H1 (cell line): ENCODE measurements at regions of chr2 and their contacts with region 1.

Region 1: DNA sequence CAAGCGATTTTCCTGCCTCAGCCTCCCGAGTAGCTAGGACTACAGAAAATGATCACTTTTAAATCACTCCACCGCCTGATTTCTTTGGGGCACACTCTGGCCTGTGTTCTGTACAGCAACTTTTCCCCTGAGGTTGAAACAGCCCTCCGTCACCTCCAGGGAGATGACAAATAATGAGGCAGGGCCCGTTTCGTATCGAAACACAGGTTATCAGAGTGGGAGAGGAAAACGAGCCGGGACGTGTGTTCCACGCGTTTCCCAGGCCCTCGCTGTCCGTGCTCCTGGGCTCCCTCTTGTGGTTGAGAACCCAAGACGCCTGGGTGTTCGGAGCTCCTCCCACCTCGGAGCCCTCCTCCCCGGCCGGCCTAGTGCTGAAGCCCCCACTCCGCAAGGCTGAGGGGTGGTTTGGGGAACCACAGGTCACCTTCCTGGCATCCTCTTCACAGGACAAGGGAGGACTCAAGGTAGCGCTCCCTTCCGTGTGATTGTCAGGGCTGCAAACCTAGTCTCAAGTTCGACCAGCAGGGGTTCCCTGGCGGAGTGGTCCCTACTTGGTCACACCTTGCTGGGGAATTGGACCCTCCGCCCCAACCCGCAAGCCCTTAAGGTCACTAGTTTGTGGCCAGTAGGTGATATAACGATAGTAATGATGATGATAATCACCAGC is 12.8 kb downstream of the ATP6V1B1 start:
- DNase-seq: peak in 1 of 2 experiments; percentile 92
- H3K4me3 ChIP-seq: peak overlapping the region in 3 of 4 experiments; percentile 25 to 46 (median 38); a peak in 5 of 8 replicates
- H3K27ac ChIP-seq: no peak overlapping the region
- H3K4me1 ChIP-seq: peaks cover 1 to 6% (median 3%) of the 10 kb centered on the region in 4 experiments
- H3K27me3 ChIP-seq: peaks cover 11 to 29% (median 26%) of the 10 kb centered on the region in 4 experiments
- CTCF ChIP-seq: peak; percentile 81 to 88 (median 86)
- EP300 ChIP-seq: no peak
- POLR2A ChIP-seq: no peak
- RAD21 ChIP-seq: peak; percentile 45 to 47; a peak in 3 of 4 replicates

Region 2: DNA sequence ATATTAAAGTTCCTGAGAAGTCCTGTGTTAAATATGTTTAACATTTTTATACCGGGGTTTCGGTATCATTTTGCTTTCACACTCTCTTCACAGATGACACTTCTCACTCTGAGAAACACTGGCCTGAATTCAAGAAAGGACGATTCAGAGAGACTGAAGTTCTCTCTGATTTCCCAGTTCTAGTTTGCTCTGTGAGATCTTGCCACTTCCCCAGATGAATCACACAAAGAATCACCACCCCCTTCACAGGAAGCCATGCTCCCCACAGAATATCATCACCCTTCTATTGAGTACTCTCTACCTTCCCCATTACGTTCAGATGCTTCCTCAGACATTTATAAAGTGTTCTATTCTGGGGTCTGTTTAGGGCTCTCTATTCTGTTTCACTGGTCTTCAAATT is 96.8 kb before region 1 on chr2:
- CTCF ChIA-PET with region 1: interaction called, 10 read pairs
- POLR2A ChIA-PET with region 1: no interaction called
- DNase-seq: no peak
- H3K4me3 ChIP-seq: no peak overlapping the region
- H3K27ac ChIP-seq: no peak overlapping the region
- H3K4me1 ChIP-seq: no peaks in the 10 kb centered on the region
- H3K27me3 ChIP-seq: no peaks in the 10 kb centered on the region
- CTCF ChIP-seq: no peak
- EP300 ChIP-seq: no peak
- POLR2A ChIP-seq: no peak
- RAD21 ChIP-seq: no peak

Region 3: DNA sequence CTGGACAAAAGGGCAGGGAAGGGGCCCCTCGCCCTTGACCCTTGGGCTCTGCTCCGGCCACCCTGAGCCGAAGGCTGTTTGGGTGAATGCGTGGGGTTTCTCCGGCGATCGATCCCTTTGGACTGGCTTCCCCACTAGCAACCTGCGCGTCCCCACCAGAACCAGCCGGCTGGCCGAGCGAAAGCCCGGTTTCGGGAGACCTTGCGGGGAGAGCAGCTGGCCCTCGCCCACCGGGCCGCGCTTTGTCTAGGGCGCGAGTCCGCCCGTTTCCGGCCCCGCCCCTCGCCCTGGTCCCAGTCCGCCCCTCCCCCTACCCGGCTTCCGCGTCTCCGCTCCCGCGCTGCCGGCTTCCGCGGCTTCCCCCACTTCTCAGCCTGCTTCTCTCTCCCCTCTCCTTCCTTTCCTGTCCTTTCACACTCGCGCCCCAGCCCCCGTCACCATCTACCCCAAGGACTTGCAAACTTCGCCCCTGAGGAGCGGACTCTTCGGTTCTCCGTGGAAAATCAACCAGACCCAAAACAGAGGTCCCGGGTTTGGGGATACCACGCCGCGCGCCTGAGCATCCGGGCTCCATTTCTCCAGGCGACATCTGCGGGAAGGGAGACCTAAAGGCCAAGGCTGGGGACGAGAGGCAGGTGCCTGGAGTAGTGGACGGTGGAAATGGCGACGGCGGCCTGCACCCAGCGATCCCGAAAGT is 60.8 kb before region 1 on chr2:
- CTCF ChIA-PET with region 1: interaction called, 29 read pairs
- POLR2A ChIA-PET with region 1: no interaction called
- DNase-seq: peak in 1 of 2 experiments; percentile 90
- H3K4me3 ChIP-seq: peak overlapping the region; percentile 22 to 62 (median 40); a peak in 7 of 8 replicates
- H3K27ac ChIP-seq: no peak overlapping the region
- H3K4me1 ChIP-seq: peaks cover 0 to 20% (median 6%) of the 10 kb centered on the region in 4 experiments; a peak in 5 of 7 replicates
- H3K27me3 ChIP-seq: peaks cover 77 to 100% (median 93%) of the 10 kb centered on the region in 4 experiments
- CTCF ChIP-seq: no peak
- EP300 ChIP-seq: no peak
- POLR2A ChIP-seq: no peak
- RAD21 ChIP-seq: no peak

Region 4: DNA sequence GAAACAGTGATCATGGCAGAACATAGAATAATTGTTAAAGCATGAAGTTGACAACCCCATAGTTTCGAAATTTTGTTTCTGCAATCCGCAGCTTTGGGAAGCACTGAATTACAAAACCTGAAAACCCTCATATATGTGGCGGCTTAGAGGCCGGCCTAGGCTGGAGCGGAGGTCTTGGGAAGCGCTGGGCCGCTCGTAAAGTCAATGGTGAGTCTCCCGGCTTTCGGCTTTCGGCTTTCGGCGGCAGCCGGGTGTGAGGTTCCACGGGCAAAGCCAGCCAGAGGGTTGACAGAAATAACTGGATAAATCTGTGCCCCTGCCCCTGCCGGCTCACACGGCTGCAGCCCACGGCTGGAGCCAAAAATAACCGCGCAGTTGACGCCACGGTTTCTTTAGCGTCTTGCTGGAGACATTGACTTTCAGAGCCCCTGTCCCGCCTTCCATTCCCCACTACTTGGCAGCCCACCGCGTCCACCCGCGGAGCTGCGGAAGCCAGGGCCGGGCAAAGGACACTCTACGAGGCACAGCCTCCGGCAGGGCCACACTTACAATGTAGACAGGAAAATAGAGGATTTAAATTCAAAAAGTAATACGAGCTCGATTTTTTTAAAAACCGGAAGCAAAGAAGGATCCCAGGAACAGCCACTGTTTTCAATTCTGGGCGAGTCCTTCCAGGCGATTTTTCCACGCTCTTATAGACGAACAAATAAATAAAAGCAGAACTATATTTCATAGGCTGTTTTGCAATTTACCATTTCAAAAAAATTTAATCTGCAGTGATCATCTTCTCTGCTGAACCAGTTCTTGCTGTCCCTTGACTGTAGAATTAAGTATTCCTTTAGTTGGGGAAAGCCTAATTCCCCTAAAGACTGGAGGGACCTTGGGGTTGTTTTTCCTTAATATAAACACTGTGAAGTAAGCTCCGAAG is 41.1 kb before region 1 on chr2:
- CTCF ChIA-PET with region 1: interaction called, 16 read pairs
- POLR2A ChIA-PET with region 1: no interaction called
- DNase-seq: peak in 1 of 2 experiments; percentile 59
- H3K4me3 ChIP-seq: peak overlapping the region in 1 of 4 experiments; percentile 40; a peak in 2 of 8 replicates
- H3K27ac ChIP-seq: no peak overlapping the region
- H3K4me1 ChIP-seq: peaks cover 0 to 12% (median 7%) of the 10 kb centered on the region in 4 experiments; a peak in 4 of 7 replicates
- H3K27me3 ChIP-seq: peaks cover 64 to 84% (median 69%) of the 10 kb centered on the region in 4 experiments
- CTCF ChIP-seq: no peak
- EP300 ChIP-seq: no peak
- POLR2A ChIP-seq: no peak
- RAD21 ChIP-seq: no peak

Region 5: DNA sequence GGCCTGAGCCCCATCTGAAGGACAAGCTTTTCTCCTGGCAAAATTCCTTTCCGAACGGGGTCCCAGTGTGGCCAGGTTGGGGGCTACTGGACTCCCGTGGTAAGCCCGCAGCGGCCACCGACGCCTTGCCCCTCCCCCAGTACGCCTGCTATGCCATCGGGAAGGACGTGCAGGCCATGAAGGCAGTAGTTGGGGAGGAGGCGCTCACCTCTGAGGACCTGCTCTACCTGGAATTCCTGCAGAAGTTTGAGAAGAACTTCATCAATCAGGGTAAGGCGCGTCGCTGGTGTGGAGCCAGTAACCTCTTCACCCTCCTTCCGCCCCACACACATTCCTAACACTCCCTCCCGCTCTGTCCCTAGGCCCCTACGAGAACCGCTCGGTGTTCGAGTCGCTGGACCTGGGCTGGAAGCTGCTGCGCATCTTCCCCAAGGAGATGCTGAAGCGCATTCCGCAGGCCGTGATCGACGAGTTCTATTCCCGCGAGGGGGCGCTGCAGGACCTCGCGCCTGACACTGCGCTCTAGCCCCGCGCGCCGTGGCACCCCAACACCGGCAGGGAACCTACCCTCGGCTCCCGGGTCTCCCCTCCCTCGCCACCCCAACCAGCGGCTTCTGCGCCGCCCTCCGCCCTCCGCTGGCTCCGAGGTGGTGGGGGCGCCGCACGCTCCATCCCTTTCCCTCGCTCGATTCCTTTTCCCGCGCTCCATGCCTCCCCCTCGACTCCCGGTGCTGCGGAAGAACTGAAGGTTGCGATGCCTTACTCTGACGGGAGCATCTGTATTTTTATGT is 16.3 kb after region 1 on chr2:
- CTCF ChIA-PET with region 1: interaction called, 43 read pairs
- POLR2A ChIA-PET with region 1: interaction called, 3 read pairs
- DNase-seq: peak in 1 of 2 experiments; percentile 92
- H3K4me3 ChIP-seq: peak overlapping the region in 3 of 4 experiments; percentile 18 to 64 (median 27); a peak in 7 of 8 replicates
- H3K27ac ChIP-seq: no peak overlapping the region
- H3K4me1 ChIP-seq: no peaks in the 10 kb centered on the region
- H3K27me3 ChIP-seq: peaks cover 10 to 38% (median 28%) of the 10 kb centered on the region in 4 experiments
- CTCF ChIP-seq: peak in 2 of 3 experiments; percentile 84 to 90; a peak in 3 of 4 replicates
- EP300 ChIP-seq: no peak
- POLR2A ChIP-seq: no peak
- RAD21 ChIP-seq: peak; percentile 71 to 75

Region 6: GRCh38 chr2:70984576-70985282 is 36.3 kb after region 1 on chr2:
- CTCF ChIA-PET with region 1: interaction called, 12 read pairs
- POLR2A ChIA-PET with region 1: no interaction called
- DNase-seq: peak in 1 of 2 experiments; percentile 93
- H3K4me3 ChIP-seq: peak overlapping the region in 1 of 4 experiments; percentile 35; a peak in 2 of 8 replicates
- H3K27ac ChIP-seq: no peak overlapping the region
- H3K4me1 ChIP-seq: peaks cover 0 to 6% (median 4%) of the 10 kb centered on the region in 4 experiments; a peak in 4 of 7 replicates
- H3K27me3 ChIP-seq: peaks cover 0 to 4% (median 2%) of the 10 kb centered on the region in 4 experiments; a peak in 5 of 7 replicates
- CTCF ChIP-seq: peak; percentile 90 to 98 (median 91)
- EP300 ChIP-seq: no peak
- POLR2A ChIP-seq: no peak
- RAD21 ChIP-seq: peak; percentile 67 to 78